AG04449 (cell line): ENCODE measurements at regions of chr16 and their contacts with region 1.

Region 1: DNA sequence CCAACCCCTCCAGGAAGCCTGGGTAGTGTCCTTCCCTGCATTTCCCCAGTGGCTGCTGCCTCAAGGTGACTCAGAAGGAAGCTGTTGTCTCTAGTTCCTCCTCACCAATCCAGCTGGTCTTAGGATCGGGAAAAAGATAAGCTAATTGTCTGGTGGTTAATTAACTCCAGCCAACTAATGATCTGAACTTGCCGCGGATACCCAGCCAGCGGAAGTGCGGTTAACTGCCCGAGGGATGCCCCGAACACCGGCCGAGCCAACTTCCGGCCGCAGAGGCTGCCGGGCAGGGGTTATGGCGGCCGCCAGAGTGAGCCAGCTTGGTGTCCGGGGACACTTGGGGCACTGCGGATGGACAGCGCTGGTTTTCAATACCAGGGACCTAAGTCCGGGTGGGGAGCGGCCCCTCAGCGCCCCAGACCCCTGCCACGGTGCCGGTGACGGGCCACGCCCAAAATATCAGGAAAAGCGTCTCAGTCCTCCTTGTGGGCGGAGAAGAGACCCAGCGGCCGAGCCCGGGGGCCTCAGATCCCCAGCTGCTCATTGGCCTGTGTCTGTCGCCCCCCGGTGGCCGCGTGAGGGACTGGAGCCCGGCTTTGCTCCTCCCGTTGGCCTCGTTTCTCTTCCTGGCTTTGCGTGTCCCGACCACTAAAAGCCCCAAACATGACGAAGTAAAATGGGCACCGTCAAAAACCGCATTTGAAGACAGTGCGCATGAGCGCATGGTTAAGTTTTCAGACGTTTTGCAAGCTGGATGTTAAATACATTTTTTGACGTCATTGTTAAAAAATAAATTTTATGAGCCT is 10.2 kb upstream of the PRSS22 start:
- DNase-seq: peak; percentile 51
- H3K4me3 ChIP-seq: peak overlapping the region; percentile 70
- CTCF ChIP-seq: peak; percentile 98

Region 2: GRCh38 chr16:2752035-2752849 is 115.9 kb before region 1 on chr16 and contains the start of gene SRRM2:
- CTCF ChIA-PET with region 1: interaction called, 10 read pairs
- POLR2A ChIA-PET with region 1: interaction called, 12 read pairs
- DNase-seq: peak; percentile 72
- H3K4me3 ChIP-seq: peak within 1 kb of the TSS; percentile 81
- CTCF ChIP-seq: no peak

Region 3: DNA sequence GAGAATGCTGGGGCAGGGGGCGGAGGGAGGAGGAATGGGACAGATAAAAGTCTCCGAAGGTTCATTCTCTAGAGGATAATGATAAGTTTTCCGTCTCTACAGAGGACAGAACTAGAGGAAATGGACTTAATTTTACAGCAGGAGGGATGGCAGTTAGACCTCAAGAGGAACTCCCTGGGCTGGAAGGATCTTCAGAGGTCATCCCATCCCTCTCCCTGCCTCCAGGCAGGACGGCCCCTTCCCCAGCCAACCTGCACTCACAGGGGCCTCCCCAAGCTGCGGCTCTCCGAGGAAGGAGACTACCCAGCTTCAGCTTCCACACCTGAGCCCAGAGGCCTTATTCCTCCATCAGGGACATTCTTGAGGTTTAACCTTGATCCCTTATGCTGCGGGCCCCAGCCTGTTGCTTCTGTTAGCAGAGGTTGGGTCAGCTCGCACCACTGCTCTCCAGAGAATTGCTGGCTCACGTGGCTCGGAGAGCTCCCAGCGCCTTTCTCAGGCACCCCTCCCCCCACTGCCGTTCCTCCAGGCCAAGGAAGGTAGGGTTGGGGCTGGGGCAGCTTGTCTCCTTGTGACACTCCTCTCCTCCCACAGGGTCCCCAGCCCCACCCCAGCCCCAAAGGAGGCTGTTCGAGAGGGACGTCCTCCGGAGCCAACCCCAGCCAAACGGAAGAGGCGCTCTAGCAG is 99.6 kb before region 1 on chr16:
- CTCF ChIA-PET with region 1: interaction called, 12 read pairs
- POLR2A ChIA-PET with region 1: no interaction called
- DNase-seq: no peak
- H3K4me3 ChIP-seq: no peak overlapping the region
- CTCF ChIP-seq: no peak

Region 4: DNA sequence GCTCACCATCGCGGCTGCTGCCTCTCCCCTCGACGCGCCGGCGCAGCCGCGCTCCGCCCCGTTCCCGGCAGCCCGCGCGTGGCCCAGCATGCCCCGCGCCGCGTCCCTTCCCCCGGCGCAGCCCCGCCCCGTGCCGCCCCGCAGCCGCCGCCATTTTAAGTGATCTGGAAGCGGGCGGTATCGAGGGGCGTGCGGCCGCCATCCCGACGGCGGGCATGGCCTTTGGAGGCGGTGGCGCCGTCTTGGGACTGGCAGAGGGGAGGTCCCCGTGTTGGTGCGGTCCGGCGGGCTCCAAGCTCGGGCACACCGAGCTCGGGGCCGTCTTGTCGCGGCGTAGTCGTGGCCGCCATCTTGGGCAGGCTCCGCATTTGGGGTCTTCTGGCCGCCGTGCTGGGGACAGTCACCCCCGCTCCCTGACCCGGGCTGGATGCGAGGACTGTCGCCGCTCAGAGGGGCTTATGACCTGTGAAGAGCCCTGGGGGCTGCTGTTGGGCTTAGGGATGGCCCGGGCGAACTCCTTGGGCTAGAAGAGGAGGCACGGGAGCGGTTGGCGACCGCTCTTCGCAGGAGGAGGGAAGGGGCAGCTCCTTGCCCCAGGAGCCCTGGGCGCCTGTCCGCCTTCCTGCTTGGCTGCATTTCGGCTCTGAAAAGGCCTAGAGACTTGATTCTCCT is 90.8 kb before region 1 on chr16 and contains the start of gene ELOB:
- CTCF ChIA-PET with region 1: interaction called, 10 read pairs
- POLR2A ChIA-PET with region 1: interaction called, 12 read pairs
- DNase-seq: no peak
- H3K4me3 ChIP-seq: peak within 1 kb of the TSS; percentile 96
- CTCF ChIP-seq: no peak

Region 5: GRCh38 chr16:2846511-2847310 is 21.5 kb before region 1 on chr16:
- CTCF ChIA-PET with region 1: interaction called, 38 read pairs
- POLR2A ChIA-PET with region 1: no interaction called
- DNase-seq: no peak
- H3K4me3 ChIP-seq: no peak overlapping the region
- CTCF ChIP-seq: no peak

Region 6: GRCh38 chr16:2883027-2883851 is 15.1 kb after region 1 on chr16 and contains the start of gene FLYWCH2:
- CTCF ChIA-PET with region 1: interaction called, 37 read pairs
- POLR2A ChIA-PET with region 1: interaction called, 6 read pairs
- DNase-seq: peak; percentile 63
- H3K4me3 ChIP-seq: peak within 1 kb of the TSS; percentile 83
- CTCF ChIP-seq: no peak

Region 7: DNA sequence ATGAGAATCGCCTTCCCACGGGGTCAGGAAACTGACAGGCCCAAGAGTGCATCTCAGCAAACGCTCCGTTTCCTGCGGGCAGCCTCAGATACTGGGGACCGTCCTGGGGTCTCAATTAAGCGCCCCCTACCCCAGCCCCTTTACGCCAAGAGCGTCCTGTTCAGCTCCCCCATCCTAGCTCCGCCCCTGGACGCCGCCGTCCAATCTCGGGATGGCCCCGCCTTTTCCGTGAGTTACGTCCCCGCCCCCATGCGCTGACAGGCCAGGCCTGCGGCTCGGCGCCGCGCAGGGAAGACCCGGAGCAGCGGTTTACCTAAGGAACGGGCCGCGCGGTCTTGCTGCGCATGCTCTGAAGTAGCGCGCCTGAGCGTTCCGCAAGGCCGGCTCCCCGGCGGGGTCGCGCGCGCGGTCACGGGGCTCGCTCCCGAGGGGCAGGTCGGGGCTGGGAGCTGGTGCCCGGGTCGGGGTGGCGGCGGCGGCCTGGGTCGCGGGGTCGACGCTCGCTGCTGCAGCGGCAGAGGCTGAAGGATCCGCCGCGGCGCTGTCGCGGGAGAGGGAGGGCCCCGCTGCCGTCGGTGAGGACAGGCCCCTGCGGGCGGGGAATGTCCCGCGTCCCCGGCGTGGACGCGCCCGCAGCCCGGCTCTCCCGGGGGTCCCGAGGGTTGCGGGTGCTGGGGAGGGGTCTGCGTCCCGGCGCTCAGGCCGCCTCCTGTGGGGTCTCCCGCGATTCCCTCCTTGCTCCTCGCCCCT is 43.6 kb after region 1 on chr16 and contains the start of gene FLYWCH1:
- CTCF ChIA-PET with region 1: interaction called, 396 read pairs
- POLR2A ChIA-PET with region 1: no interaction called
- DNase-seq: peak; percentile 80
- H3K4me3 ChIP-seq: peak within 1 kb of the TSS; percentile 85
- CTCF ChIP-seq: no peak

Region 8: GRCh38 chr16:2980227-2981086 is 112.3 kb after region 1 on chr16 and contains the start of gene PKMYT1:
- CTCF ChIA-PET with region 1: no interaction called
- POLR2A ChIA-PET with region 1: no interaction called
- DNase-seq: no peak
- H3K4me3 ChIP-seq: peak within 1 kb of the TSS; percentile 86
- CTCF ChIP-seq: no peak

Region 9: GRCh38 chr16:3012828-3013420 is 144.7 kb after region 1 on chr16 and contains the start of gene CLDN9:
- CTCF ChIA-PET with region 1: no interaction called
- POLR2A ChIA-PET with region 1: no interaction called
- DNase-seq: no peak
- H3K4me3 ChIP-seq: no peak within 1 kb of the TSS
- CTCF ChIP-seq: no peak